ENCODE measurements at regions of chr1 and their contacts with region 1.

Region 1: DNA sequence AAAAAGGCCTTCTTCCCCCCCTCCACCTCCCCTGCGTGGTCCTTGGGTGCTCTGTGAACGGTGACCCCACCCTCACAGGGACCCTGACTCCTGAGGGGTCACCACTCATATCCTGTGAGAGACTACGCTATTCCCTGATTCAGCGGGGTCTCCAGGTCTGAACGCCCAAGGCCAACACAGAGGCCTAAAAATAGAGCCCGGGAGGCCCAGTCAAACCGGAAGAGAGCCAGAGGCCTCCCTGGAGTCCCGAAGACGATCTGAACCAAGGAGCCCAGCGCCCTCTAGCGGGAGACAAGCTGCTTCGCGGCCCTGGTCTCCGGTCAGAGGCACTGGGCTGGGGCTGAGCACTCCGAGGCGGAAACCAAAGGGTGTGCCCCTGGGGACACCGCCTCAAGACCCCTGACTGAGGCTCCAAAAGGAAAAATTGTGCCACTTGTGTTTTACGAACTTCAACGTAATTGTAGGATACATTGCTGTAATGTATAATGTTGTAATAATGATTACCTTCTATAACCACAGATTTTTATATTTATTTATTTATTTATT is 42.4 kb upstream of the PSEN2 start:
- DNase-seq: peak; percentile 94
- CTCF ChIP-seq: peak; percentile 98

Region 2: DNA sequence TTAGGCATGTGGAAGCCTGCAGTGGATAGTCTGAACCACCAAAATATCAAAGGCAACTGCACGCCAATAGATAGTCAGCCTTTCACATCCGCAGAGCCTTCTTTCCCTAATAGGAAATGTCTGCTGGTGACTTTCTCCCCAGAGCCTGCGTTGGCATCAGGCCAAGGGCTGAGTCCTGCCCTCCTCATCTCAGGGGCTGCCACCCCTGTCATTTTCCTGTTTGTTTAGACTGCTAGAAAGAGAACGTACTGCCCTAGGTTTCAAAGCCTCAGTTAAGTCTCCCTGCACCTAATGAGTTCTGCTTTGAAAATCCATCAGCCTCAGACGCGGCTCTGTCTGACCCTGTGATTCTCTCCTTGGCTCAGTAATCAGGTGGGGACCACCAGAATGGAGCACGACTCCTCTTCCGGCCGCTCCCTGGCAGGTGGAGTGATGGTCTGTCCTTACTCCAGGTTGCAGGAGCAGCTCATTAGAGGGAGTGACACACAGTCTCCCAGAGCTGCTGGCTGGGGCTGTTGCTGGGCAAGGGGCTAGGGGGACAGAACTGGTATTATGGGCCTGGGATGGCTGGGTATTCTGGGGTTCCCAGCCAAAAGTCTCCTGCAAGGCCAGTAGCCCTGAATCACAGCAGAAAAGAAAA is 252.2 kb before region 1 on chr1:
- CTCF ChIA-PET with region 1: no interaction called
- POLR2A ChIA-PET with region 1: no interaction called
- DNase-seq: no peak
- CTCF ChIP-seq: no peak

Region 3: DNA sequence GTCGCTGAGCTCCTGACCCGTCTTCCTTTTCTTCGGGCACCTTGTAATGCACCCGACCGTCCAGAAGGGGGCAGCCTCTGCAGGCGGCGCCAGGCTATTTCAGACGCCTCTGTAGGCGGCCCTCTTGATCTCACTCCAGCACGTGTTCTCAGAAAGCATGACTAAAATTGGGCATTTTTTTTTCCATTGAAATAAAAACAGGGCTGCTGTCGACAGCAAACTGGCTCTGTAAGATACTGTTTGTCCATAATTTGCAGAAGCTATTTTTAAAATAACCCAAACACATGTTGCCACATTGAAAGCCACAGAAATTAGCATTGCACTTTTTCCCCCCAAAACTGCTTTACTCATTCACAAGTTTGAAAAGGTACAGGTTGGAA is 201.5 kb before region 1 on chr1:
- CTCF ChIA-PET with region 1: interaction called, 27 read pairs
- POLR2A ChIA-PET with region 1: no interaction called
- DNase-seq: peak; percentile 76
- CTCF ChIP-seq: peak; percentile 69

Region 4: GRCh38 chr1:226772446-226773139 is 55.4 kb before region 1 on chr1:
- CTCF ChIA-PET with region 1: no interaction called
- POLR2A ChIA-PET with region 1: no interaction called
- DNase-seq: peak; percentile 63
- CTCF ChIP-seq: no peak

Region 5: DNA sequence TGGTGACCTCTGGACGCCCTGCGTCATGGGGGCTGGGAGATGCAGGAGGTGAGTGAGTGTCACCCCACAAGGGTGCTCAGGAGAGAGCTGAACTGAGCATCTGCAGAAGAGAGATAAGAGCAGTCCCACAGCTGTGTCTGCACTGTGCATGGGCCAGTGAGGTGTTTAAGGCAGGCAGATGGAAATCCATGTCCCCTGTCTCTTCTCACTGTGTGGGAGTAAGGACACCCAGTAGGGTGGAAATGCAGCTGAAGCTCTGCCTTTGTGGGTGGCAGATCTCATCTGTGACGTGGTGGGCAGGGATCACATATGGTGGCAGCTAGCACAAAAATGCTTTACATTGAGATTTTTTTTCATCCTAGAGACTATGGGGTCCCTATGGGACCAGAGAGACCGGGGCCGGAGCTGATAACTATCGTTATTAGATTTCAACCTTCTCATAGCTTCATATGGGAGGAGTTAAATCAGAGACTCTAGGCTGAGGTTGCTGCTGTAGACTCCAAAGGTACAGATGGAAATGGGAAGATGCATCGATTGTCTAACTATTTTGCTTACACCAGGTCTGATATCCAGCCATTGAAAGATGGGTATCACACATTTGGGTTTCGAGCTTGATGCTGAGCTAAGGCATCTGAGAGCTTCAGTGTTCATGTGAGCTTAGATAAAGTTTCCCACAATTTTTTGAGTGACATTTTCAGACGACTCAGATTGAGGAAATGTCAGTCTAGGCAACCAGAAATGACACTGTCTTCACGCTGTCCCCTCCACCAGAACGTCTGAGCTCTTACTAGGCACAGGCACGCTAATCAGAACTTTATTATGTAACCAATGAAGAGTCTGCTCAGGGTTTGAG is 22.9 kb before region 1 on chr1:
- CTCF ChIA-PET with region 1: interaction called, 13 read pairs
- POLR2A ChIA-PET with region 1: interaction called, 3 read pairs
- DNase-seq: no peak
- CTCF ChIP-seq: no peak

Region 6: DNA sequence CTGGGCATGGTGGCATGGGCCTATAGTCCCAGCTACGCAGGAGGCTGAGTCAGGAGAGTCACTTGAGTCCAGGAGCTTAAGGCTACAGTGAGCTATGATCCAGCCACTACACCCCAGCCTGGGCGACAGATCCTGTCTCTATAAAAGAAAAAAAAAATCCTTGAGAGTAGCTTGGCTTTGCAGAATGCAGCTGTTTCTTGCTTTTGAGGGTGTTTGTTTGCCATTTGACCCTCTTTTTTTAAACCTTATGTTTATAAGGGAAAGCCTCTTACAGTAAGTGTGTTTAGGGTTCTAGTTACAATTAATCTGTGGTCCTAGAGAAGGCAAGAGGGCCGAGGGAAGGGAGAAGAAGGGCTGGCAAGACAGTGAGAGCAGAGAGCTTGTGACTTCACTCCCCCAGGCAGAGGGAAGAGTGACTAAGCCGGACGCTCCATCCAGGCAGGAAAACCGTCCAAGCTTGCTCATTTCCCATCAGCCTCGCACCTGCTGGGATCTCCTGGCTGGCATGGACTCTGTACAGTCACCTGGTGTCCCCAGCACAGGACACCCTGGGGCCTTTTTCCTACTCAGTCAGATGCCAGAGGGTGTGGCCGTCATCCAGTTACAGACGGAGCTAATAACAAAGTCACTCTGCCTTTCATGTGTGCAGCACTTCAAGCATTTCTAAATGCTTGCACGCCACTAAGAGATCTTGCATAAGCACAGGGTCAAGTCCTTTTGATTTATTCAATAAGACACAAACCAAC is 13.1 kb before region 1 on chr1:
- CTCF ChIA-PET with region 1: interaction called, 33 read pairs
- POLR2A ChIA-PET with region 1: interaction called, 3 read pairs
- DNase-seq: no peak
- CTCF ChIP-seq: no peak